Caco-2 (cell line): ENCODE measurements at regions of chr2 and their contacts with region 1.

Region 1: DNA sequence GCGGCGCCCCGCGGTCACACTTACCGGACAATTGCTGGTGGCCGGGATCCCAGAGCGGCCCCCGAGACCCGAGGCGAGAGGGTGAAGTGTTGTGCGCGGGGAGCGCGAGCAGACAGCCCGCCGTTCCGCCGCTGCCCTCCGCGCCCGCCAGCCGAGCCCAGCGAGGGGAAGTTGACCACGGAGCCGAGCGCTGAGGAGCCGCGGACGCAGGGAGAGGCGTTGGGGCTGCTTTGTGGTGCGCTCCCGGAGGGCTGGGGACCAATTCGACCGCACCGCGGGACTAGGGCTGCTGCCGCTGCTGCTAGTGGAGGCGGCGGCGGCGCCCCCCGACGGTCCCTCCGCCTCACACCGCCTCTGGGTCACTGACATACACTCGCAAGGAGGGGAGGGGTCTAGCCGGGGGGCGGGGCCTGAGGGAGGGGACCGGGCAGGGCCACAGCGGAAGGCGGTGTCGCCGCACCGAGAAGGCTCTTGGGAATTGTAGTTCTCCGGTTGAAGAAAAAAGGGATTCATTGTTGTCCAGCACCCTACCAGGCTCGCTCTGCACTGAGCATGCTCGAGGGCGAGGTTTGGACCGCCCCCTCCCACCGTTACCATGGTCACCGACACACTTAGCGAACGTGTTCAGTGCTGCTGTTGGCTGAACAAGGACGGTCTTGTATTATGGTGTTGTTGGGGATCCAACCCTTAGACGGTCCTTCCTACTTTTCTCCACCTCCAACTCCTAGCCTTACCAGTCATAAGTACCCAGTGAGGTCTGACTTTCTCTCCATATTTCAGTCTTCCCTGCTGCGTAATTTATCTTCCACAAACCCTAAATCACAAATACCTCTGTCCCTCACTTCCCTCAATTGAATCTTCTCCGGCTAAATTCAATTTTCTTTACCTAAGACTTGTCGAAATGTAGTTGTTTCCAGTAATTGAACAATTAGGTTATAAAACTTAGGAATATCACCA is at the start of gene PELI1:
- DNase-seq: peak; percentile 99
- H3K4me3 ChIP-seq: peak within 1 kb of the TSS; percentile 100
- H3K4me3 Mint-ChIP-seq: peak within 1 kb of the TSS; percentile 88
- H3K27ac Mint-ChIP-seq: peak within 1 kb of the TSS; percentile 88
- H3K4me1 ChIP-seq: peaks cover 25% of the 10 kb centered on the region
- H3K4me1 Mint-ChIP-seq: peaks cover 14% of the 10 kb centered on the region
- H3K27me3 ChIP-seq: no peaks in the 10 kb centered on the region
- H3K27me3 Mint-ChIP-seq: no peaks in the 10 kb centered on the region
- CTCF ChIP-seq: peak in 1 of 2 experiments; percentile 43
- total RNA-seq, gene PELI1: 64.1 and 69.2 TPM in 2 replicates

Region 2: DNA sequence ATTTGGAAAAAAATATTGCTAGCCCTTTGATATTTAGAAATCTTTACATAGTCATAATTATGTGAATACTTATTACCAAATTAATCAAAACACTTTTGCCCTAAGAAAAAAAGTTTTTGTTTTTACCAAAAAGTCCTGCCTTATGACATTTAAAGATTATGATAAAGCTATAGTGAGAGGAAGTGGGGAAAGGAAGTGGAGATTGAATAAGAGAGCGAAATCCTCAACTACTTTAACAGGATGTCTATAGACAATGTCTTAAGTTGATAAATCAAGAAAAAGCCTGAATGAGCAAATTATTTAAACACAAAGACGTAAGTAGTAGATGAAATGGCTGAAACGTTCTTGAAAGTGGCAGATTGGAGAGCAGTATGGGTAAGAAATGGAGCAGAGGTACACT is 104.2 kb before region 1 on chr2:
- CTCF ChIA-PET with region 1: no interaction called
- POLR2A ChIA-PET with region 1: no interaction called
- intact Hi-C with region 1: no loop called
- DNase-seq: no peak
- H3K4me3 ChIP-seq: no peak overlapping the region
- H3K4me3 Mint-ChIP-seq: no peak overlapping the region
- H3K27ac Mint-ChIP-seq: no peak overlapping the region
- H3K4me1 ChIP-seq: no peaks in the 10 kb centered on the region
- H3K4me1 Mint-ChIP-seq: peaks cover 1% of the 10 kb centered on the region
- H3K27me3 ChIP-seq: no peaks in the 10 kb centered on the region
- H3K27me3 Mint-ChIP-seq: no peaks in the 10 kb centered on the region
- CTCF ChIP-seq: no peak

Region 3: GRCh38 chr2:64052468-64053241 is 91.7 kb before region 1 on chr2:
- CTCF ChIA-PET with region 1: no interaction called
- POLR2A ChIA-PET with region 1: no interaction called
- intact Hi-C with region 1: loop called (anchors 1 kb)
- DNase-seq: no peak
- H3K4me3 ChIP-seq: no peak overlapping the region
- H3K4me3 Mint-ChIP-seq: no peak overlapping the region
- H3K27ac Mint-ChIP-seq: peak overlapping the region; percentile 32
- H3K4me1 ChIP-seq: peaks cover 26% of the 10 kb centered on the region
- H3K4me1 Mint-ChIP-seq: peaks cover 41% of the 10 kb centered on the region
- H3K27me3 ChIP-seq: no peaks in the 10 kb centered on the region
- H3K27me3 Mint-ChIP-seq: no peaks in the 10 kb centered on the region
- CTCF ChIP-seq: no peak

Region 4: GRCh38 chr2:64101141-64101591 is 43.2 kb before region 1 on chr2:
- CTCF ChIA-PET with region 1: no interaction called
- POLR2A ChIA-PET with region 1: interaction called, 4 read pairs
- intact Hi-C with region 1: loop called (anchors 1 kb)
- DNase-seq: no peak
- H3K4me3 ChIP-seq: no peak overlapping the region
- H3K4me3 Mint-ChIP-seq: no peak overlapping the region
- H3K27ac Mint-ChIP-seq: no peak overlapping the region
- H3K4me1 ChIP-seq: peaks cover 92% of the 10 kb centered on the region
- H3K4me1 Mint-ChIP-seq: peaks cover 73% of the 10 kb centered on the region
- H3K27me3 ChIP-seq: no peaks in the 10 kb centered on the region
- H3K27me3 Mint-ChIP-seq: no peaks in the 10 kb centered on the region
- CTCF ChIP-seq: no peak

Region 5: DNA sequence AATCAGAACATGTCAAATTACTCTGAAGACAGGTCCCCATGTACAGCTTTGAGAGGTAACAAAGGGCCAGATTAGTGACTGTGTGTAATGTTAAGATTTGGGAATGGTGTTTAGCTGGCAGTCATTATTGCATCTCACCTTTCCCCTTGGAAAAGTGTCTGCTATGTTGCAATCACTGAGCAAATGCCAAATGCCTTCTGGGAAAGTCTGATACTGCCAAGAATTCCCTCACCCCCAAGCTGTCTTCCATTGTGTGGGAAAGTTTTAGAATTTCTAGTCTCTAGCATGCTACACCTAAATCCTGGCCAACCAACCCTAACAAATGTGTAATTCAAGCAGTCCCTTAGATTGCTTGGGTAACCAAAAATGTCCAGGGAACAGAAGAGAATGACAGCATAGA is 13.5 kb after region 1 on chr2:
- CTCF ChIA-PET with region 1: no interaction called
- POLR2A ChIA-PET with region 1: no interaction called
- intact Hi-C with region 1: loop called (anchors 1 kb)
- DNase-seq: peak in 1 of 2 experiments; percentile 16
- H3K4me3 ChIP-seq: no peak overlapping the region
- H3K4me3 Mint-ChIP-seq: no peak overlapping the region
- H3K27ac Mint-ChIP-seq: no peak overlapping the region
- H3K4me1 ChIP-seq: peaks cover 17% of the 10 kb centered on the region
- H3K4me1 Mint-ChIP-seq: peaks cover 25% of the 10 kb centered on the region
- H3K27me3 ChIP-seq: no peaks in the 10 kb centered on the region
- H3K27me3 Mint-ChIP-seq: no peaks in the 10 kb centered on the region
- CTCF ChIP-seq: no peak

Region 6: GRCh38 chr2:64177315-64177714 is 33.0 kb after region 1 on chr2:
- CTCF ChIA-PET with region 1: interaction called, 5 read pairs
- POLR2A ChIA-PET with region 1: no interaction called
- intact Hi-C with region 1: loop called (anchors 1 kb)
- DNase-seq: peak; percentile 63 to 72
- H3K4me3 ChIP-seq: no peak overlapping the region
- H3K4me3 Mint-ChIP-seq: peak overlapping the region; percentile 12
- H3K27ac Mint-ChIP-seq: no peak overlapping the region
- H3K4me1 ChIP-seq: peaks cover 50% of the 10 kb centered on the region
- H3K4me1 Mint-ChIP-seq: peaks cover 60% of the 10 kb centered on the region
- H3K27me3 ChIP-seq: no peaks in the 10 kb centered on the region
- H3K27me3 Mint-ChIP-seq: no peaks in the 10 kb centered on the region
- CTCF ChIP-seq: no peak

Region 7: DNA sequence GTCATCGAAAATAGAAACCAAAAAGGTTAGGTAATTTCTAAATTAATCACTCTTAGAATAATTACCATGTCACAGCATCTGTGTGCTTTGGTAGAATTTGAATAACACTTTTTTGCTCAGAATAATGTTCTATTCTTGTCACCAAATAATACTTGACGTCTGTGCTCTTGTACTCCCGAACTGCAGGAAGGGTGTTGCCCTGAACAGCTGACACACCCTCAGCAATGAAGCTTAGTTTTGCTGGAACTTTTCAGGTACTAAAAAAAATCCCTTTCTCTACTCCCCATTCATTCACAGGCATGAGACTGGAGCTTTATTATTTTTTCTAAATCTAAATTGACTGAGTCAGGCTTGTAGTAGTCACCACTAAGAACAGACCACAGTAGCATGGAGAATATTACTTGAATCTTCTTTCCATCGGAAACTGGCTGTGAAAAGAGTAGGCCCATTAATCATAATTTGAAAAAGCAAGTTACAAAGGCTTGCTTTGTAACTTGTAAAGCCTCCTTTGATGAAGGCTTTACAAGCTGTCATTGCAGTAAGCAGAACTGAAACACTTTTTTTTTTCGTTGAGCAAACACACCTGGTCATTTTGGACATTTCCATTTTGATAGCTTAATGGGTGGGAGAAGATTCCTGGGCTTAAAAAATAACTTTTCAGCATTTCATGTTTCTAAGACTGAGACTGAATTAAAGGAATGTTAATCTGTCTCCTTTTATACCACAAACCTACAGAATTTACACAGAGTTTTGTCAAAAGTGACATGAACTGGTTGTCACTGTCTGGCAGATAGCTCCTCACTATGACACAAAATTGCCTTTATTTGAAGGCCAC is 70.2 kb after region 1 on chr2:
- CTCF ChIA-PET with region 1: no interaction called
- POLR2A ChIA-PET with region 1: interaction called, 3 read pairs
- intact Hi-C with region 1: loop called (anchors 5 kb)
- DNase-seq: peak in 1 of 2 experiments; percentile 69
- H3K4me3 ChIP-seq: no peak overlapping the region
- H3K4me3 Mint-ChIP-seq: peak overlapping the region; percentile 28
- H3K27ac Mint-ChIP-seq: peak overlapping the region; percentile 37
- H3K4me1 ChIP-seq: peaks cover 26% of the 10 kb centered on the region
- H3K4me1 Mint-ChIP-seq: peaks cover 21% of the 10 kb centered on the region
- H3K27me3 ChIP-seq: no peaks in the 10 kb centered on the region
- H3K27me3 Mint-ChIP-seq: no peaks in the 10 kb centered on the region
- CTCF ChIP-seq: no peak

Region 8: GRCh38 chr2:64311948-64312621 is 167.8 kb after region 1 on chr2:
- CTCF ChIA-PET with region 1: no interaction called
- POLR2A ChIA-PET with region 1: no interaction called
- intact Hi-C with region 1: loop called (anchors 5 kb)
- DNase-seq: peak in 1 of 2 experiments; percentile 28
- H3K4me3 ChIP-seq: no peak overlapping the region
- H3K4me3 Mint-ChIP-seq: no peak overlapping the region
- H3K27ac Mint-ChIP-seq: no peak overlapping the region
- H3K4me1 ChIP-seq: no peaks in the 10 kb centered on the region
- H3K4me1 Mint-ChIP-seq: peaks cover 7% of the 10 kb centered on the region
- H3K27me3 ChIP-seq: no peaks in the 10 kb centered on the region
- H3K27me3 Mint-ChIP-seq: no peaks in the 10 kb centered on the region
- CTCF ChIP-seq: no peak